ENCODE measurements at regions of chr19 and their contacts with region 1.

Region 1: DNA sequence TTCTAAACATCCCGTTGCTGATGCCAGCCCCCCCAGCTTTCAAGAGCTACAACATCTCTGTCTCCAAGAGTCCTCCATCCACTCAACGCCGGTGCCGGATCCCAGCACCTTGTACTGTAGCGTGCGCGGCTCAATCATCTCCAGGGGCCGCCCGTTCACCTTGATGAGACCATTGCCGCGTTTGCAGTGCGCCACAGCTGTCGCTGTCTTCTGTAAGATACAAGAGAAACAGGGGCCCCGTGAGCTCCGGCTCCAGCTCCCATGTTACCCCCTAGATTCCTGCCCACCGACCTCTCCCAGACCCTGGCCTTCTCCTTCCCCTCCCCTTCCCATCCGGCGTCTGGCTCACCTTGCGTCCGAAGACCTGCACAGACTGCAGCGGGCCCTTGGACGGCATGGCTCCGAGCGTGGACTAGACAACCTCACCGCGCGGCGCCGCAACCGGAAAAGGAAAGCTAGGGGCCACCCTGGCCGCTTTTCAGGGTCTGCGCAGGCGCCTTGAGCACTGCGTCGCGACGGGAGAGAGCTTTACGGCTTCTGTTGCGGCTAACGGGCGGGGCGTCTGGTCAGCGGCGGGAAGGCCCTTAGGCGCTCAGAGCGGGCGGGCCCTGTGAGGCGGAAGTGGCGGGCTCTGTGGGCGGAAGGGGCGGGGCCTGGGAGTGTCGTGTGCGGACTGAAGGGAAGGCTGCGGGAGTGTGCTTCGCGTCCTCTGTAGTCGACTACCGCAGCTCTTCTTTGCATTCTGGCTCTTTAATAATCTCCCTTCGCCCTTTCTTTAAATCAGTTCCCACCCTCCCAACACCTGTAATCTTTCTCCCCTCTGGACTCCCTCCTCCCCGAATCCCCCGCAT is at the start of gene RPS16:
- DNase-seq: peak; percentile 100
- H3K4me3 Mint-ChIP-seq: peak within 1 kb of the TSS; percentile 100
- H3K27ac Mint-ChIP-seq: peak within 1 kb of the TSS; percentile 100
- H3K4me1 Mint-ChIP-seq: peaks cover 55% of the 10 kb centered on the region
- H3K27me3 Mint-ChIP-seq: no peaks in the 10 kb centered on the region
- total RNA-seq, gene RPS16: 3,682 to 3,746 TPM

Region 2: DNA sequence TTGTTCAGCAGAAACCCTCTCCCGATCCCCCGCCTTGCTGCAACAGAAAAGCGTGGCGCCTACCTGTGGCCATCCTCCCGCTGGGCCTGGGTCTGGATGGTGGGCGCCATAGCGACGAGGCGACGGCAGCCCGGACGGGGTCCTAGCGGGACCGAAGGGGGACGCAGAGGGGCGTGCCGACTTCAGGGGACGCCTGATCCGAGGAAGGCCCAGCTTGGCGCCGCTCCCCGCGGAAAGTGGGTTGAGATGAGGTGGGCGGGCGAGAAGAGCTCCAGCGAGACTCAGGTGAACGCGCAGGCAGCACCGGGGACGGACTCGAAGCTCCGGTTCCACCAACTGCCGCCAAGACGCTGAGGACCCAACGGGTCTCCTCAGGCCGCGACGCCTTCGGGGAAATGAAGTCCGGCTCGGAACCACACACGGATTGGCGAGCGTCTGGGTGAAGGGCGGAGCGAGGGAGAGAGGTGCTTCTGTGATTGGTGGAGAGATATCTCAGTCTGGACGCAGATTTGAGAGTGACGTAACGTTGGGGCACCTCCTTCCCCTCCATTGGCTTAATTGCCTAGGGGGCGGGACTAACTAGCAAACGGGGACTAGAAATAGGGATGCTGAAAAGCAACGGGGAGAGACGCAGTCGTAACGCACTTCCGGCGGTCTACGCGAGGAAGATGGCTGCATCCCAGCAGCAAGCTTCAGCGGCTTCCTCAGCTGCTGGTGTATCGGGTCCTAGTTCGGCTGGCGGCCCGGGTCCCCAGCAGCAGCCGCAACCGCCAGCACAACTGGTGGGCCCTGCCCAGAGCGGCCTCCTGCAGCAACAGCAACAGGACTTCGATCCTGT is 44.8 kb before region 1 on chr19 and contains the starts of genes MED29 and PAF1:
- CTCF ChIA-PET with region 1: no interaction called
- POLR2A ChIA-PET with region 1: interaction called, 22 read pairs
- intact Hi-C with region 1: loop called (anchors 1 kb)
- DNase-seq: peak; percentile 98
- H3K4me3 Mint-ChIP-seq: peak within 1 kb of the TSS; percentile 95
- H3K27ac Mint-ChIP-seq: peak within 1 kb of the TSS; percentile 99
- H3K4me1 Mint-ChIP-seq: peaks cover 40% of the 10 kb centered on the region
- H3K27me3 Mint-ChIP-seq: no peaks in the 10 kb centered on the region
- total RNA-seq, gene MED29: 22.2 to 26.9 TPM
- total RNA-seq, gene PAF1: 41.6 to 43.8 TPM

Region 3: GRCh38 chr19:39406656-39407393 is 28.9 kb before region 1 on chr19 and contains the start of gene ZFP36:
- CTCF ChIA-PET with region 1: interaction called, 14 read pairs
- POLR2A ChIA-PET with region 1: interaction called, 23 read pairs
- intact Hi-C with region 1: loop called (anchors 1 kb)
- DNase-seq: peak; percentile 93
- H3K4me3 Mint-ChIP-seq: peak within 1 kb of the TSS; percentile 85
- H3K27ac Mint-ChIP-seq: peak within 1 kb of the TSS; percentile 96
- H3K4me1 Mint-ChIP-seq: peaks cover 44% of the 10 kb centered on the region
- H3K27me3 Mint-ChIP-seq: no peaks in the 10 kb centered on the region
- total RNA-seq, gene ZFP36: 104 to 118 TPM

Region 4: GRCh38 chr19:39474139-39474622 is 38.5 kb after region 1 on chr19:
- CTCF ChIA-PET with region 1: interaction called, 25 read pairs
- POLR2A ChIA-PET with region 1: no interaction called
- intact Hi-C with region 1: no loop called
- DNase-seq: peak; percentile 76
- H3K4me3 Mint-ChIP-seq: no peak overlapping the region
- H3K27ac Mint-ChIP-seq: no peak overlapping the region
- H3K4me1 Mint-ChIP-seq: peaks cover 25% of the 10 kb centered on the region
- H3K27me3 Mint-ChIP-seq: no peaks in the 10 kb centered on the region

Region 5: GRCh38 chr19:39502640-39503417 is 67.1 kb after region 1 on chr19:
- CTCF ChIA-PET with region 1: interaction called, 35 read pairs
- POLR2A ChIA-PET with region 1: interaction called, 10 read pairs
- intact Hi-C with region 1: loop called (anchors 2 kb)
- DNase-seq: peak; percentile 84
- H3K4me3 Mint-ChIP-seq: no peak overlapping the region
- H3K27ac Mint-ChIP-seq: no peak overlapping the region
- H3K4me1 Mint-ChIP-seq: peaks cover 33% of the 10 kb centered on the region
- H3K27me3 Mint-ChIP-seq: peaks cover 56% of the 10 kb centered on the region

Region 6: DNA sequence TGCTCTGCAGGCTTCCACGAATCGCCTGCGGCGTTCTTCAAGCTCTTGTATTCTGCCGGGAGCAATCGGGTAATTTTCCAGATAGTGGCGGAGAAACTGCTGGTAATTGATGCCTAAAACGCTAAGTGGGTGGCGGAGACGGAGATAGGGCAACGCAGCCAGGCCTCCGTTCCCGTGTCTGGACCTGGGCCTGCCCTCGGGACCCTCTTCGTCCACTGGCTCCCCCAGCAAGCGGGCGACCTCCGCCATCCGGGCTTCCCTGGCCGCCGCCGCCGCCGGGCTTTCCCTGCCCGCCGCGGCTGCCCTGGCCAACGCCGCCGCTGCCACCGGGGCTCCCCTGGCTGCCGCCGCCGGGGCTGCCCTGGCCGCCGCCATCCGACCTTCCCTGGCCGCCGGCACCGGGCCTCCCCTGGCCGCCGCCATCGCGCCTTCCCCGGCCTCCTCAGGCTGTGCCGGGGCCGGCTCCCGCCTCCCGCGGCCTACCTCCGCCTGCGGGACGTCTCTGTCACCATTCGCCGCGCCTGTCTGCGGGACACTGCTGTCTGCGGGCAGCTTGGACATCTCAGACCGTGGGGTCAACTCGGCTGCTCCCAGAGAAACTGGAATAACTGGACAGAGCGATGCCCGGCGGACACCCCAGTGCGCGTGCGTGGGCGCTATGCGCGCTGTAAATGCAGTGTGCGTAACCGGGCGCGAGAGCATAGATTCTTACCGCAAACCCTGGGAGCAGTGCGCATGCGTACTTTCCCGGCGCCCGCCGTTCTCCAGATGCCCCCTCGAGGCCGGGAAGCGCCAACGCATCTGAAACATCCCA is 104.0 kb after region 1 on chr19 and contains the start of gene EID2:
- CTCF ChIA-PET with region 1: interaction called, 53 read pairs
- POLR2A ChIA-PET with region 1: interaction called, 15 read pairs
- intact Hi-C with region 1: loop called (anchors 1 kb)
- DNase-seq: peak; percentile 98
- H3K4me3 Mint-ChIP-seq: peak within 1 kb of the TSS; percentile 94
- H3K27ac Mint-ChIP-seq: peak within 1 kb of the TSS; percentile 96
- H3K4me1 Mint-ChIP-seq: peaks cover 51% of the 10 kb centered on the region
- H3K27me3 Mint-ChIP-seq: peaks cover 2% of the 10 kb centered on the region
- total RNA-seq, gene EID2: 13.0 to 13.1 TPM

Region 7: DNA sequence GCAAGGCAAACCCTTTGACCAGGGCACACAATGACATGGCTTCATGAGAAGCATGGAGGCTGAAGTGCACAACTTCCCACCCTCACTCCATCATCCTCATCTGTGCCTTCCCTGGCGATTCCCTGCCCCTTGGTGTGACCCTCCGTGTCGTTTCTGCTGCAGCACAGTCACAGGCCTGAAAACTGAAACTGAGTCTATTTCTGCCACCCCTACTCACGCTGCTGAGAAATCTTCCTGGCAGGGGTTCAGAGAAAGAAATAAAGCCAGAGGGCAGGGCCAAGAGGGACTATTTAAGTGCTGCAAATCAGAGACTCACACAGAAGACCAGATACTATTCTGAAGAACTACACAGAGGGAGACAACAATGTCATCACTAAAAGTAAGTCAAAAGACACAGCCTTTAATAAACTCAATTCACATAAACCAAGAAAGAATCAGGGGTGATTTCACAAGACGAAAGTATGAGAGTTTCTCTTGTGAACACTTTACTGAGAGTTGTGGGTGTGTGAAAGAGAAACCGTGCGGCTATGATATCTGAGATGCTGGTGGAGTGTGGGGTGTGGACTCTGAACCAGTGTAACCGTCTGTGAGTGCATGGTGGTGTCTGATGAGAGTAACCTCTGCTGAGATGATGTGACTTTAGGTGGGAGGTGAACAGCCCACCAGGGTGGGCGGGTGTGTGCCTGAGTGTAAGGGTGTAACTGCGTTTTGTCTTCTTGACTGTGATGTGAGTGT is 243.5 kb after region 1 on chr19:
- CTCF ChIA-PET with region 1: interaction called, 26 read pairs
- POLR2A ChIA-PET with region 1: interaction called, 7 read pairs
- intact Hi-C with region 1: loop called (anchors 5 kb)
- DNase-seq: peak; percentile 80
- H3K4me3 Mint-ChIP-seq: peak overlapping the region; percentile 76
- H3K27ac Mint-ChIP-seq: peak overlapping the region; percentile 93
- H3K4me1 Mint-ChIP-seq: peaks cover 55% of the 10 kb centered on the region
- H3K27me3 Mint-ChIP-seq: no peaks in the 10 kb centered on the region

Measured in activated CD4-positive, alpha-beta memory T cell treated with anti-CD3 and anti-CD28 coated beads for 36 hours (primary cell).